Common myeloid progenitor, CD34-positive (primary cell): ENCODE measurements at regions of chr7 and their contacts with region 1.

Region 1: DNA sequence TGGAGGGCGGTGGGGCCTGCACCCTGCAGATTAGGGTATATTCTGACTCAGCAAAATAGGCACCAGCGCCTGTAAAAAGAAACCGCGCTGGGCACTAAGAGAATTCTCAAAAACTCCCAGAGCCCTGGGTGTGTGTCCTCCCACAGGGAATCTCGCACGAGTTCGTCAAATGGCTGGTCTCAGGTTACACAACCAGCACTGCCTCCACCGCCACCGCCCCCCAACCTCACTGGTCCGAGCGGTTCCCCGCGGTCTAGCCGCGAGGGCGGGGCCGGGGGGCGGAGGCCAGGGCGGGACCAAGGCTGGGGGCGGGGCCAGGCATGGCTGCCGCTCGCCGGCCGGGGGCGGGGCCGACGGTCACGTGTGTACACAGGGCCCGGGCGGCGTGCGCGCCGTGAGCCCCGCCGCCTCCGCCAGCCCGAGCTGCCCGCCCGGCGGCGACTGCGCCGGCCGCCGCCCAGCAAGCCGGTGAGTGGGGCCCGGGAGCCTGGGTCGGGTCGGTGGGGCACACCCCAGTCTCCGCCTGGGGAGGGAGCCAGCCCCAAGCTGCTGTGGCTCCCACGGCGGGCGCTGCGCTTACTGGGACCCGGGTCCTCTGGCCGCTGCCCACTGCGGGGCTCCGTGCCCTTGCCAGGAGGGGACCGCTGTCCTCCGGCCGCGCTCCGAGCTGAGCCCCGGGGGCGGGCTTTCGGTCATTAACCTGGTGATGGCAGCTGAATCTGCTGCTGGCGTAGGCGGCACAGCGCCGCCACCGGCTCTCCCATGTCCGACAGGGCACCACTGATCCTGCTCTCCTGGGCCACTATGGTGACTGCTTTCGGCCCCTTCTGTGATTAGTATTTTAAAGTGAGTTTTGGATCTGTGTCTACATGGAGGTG is at the start of gene GPR146:
- DNase-seq: peak; percentile 89 to 97 (median 96)
- H3K4me3 ChIP-seq: peak within 1 kb of the TSS; percentile 46 to 84 (median 73)
- H3K27ac ChIP-seq: peak within 1 kb of the TSS; percentile 51 to 83
- H3K4me1 ChIP-seq: peaks cover 12 to 83% (median 72%) of the 10 kb centered on the region in 4 experiments
- H3K27me3 ChIP-seq: no peaks in the 10 kb centered on the region

Region 2: DNA sequence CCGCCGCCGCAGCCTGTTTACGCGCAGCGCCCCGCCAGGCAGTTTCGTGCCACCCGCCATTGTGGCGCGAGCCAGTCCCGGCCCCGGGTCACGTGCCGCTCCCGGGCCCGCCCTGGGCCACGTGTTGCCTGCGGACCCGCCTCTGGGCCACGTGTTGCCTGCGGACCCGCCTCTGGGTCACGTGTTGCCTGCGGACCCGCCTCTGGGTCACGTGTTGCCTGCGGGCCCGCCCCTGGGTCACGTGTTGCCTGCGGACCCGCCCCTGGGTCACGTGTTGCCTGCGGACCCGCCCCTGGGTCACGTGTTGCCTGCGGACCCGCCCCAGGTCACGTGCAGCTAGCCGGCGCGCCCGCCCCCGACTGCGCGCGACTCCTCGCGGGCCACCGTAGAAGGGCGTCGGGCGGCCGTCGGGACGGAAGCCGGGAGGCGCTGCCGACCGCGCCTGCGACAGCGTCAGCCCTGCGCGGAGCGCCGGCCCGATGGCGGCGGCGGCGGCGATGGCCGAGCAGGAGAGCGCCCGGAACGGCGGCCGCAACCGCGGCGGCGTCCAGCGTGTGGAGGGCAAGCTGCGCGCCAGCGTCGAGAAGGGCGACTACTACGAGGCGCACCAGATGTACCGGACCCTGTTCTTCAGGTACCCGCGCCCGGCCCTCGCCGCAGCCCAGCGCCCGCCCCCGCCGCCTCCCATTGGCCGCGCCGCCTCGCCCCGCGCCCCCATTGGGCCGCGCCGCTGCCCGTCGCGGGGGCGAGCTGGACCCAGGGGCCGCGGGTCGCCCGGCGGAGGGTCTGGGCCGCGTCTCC is 168.1 kb before region 1 on chr7 and contains the start of gene GET4:
- CTCF ChIA-PET with region 1: no interaction called
- POLR2A ChIA-PET with region 1: no interaction called
- DNase-seq: peak; percentile 96 to 98 (median 98)
- H3K4me3 ChIP-seq: peak within 1 kb of the TSS; percentile 75 to 95 (median 81)
- H3K27ac ChIP-seq: peak within 1 kb of the TSS; percentile 86 to 94
- H3K4me1 ChIP-seq: peaks cover 2 to 31% (median 20%) of the 10 kb centered on the region in 4 experiments
- H3K27me3 ChIP-seq: no peaks in the 10 kb centered on the region

Region 3: DNA sequence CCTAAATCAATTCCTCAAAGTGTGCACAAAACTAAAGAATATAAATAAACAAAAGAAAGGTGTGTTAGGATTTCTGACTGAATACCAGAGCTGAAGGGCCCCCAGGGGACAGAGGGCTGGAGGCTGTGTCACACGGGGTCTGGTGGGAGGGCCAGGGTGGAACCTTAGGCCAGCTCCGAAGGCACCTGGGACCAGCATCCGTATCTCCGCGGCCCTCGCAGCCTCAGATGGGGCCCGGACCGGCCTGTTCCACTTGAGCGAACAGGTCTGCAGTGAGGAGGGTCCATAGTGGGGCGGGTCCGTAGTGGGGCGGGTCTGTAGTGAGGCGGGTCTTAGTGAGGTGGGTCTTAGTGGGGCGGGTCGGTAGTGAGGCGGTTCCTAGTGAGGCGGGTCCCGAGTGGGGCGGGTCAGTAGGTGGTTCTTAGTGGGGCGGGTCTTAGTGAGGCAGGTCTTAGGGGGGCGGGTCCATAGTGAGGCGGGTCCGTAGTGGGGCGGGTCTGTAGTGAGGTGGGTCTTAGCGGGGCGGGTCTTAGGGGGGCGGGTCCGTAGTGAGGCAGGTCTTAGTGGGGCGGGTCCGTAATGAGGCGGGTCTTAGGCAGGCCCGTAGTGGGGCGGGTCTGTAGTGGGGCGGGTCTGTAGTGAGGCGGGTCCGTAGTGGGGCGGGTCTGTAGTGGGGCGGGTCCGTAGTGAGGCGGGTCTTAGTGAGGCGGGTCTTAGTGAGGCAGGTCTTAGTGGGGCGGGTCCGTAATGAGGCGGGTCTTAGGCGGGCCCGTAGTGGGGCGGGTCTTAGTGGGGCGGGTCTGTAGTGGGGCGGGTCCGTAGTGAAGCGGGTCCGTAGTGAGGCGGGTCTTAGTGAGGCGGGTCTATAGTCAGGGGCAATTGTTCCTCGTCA is 15.0 kb after region 1 on chr7:
- CTCF ChIA-PET with region 1: interaction called, 35 read pairs
- POLR2A ChIA-PET with region 1: interaction called, 15 read pairs
- DNase-seq: peak in 2 of 3 donors; percentile 72 to 80
- H3K4me3 ChIP-seq: peak overlapping the region in 3 of 7 experiments; percentile 53 to 59 (median 54)
- H3K27ac ChIP-seq: no peak overlapping the region
- H3K4me1 ChIP-seq: peaks cover 0 to 81% (median 78%) of the 10 kb centered on the region in 4 experiments
- H3K27me3 ChIP-seq: no peaks in the 10 kb centered on the region

Region 4: DNA sequence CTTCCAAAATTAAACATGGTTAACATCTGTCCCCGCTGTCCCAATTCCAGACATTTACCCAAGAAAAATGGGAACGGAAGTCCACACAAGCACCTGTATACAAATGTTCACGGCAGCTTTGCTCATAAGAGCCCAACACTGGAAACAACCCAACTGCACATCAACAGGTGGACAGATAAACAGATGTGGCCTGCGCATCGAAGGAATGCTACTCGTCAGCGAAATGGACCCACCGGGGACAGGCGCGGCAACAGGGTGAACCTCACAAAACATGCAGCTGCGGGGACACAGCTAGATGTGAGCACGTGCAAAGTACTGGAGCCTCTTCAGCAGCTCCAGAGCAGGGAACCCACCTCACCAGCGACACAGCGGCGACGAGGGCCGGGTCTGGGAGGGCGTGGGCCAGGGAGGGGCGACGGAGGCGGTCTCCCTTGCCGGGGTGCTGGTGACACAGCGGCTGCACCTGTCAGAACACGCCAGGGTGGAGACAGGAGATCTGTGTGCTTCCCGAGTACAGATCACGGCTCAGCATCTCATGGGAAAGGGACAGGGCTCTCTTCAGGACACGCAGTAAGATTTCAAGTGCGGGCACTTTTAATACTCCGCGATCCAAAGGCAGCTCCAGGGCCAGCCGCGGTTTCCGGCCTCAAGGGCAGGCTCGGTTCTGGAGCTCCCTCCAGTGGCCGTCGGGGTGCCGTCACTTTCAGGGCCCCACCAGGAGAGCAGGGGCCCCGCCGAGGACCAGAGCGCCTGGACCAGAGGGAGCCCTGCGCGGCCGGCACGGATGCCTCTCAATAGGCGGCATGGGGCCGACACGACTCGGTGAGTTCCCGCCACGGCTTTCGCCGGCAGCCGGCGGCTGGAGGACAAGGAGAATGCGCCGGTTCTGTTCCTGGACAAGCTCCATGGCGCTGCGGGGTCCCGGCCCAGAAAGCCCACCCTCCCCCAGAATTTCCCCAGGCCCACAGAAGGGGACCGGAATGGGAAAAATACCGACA is 21.1 kb after region 1 on chr7:
- CTCF ChIA-PET with region 1: interaction called, 35 read pairs
- POLR2A ChIA-PET with region 1: interaction called, 3 read pairs
- DNase-seq: peak; percentile 66 to 85 (median 83)
- H3K4me3 ChIP-seq: peak overlapping the region in 5 of 7 experiments; percentile 37 to 77 (median 44)
- H3K27ac ChIP-seq: no peak overlapping the region
- H3K4me1 ChIP-seq: peaks cover 0 to 38% (median 36%) of the 10 kb centered on the region in 4 experiments
- H3K27me3 ChIP-seq: no peaks in the 10 kb centered on the region

Region 5: GRCh38 chr7:1103009-1103788 is 58.8 kb after region 1 on chr7:
- CTCF ChIA-PET with region 1: no interaction called
- POLR2A ChIA-PET with region 1: no interaction called
- DNase-seq: no peak
- H3K4me3 ChIP-seq: no peak overlapping the region
- H3K27ac ChIP-seq: no peak overlapping the region
- H3K4me1 ChIP-seq: peaks cover 0 to 4% (median 0%) of the 10 kb centered on the region in 4 experiments
- H3K27me3 ChIP-seq: no peaks in the 10 kb centered on the region